ENCODE measurements at regions of chr17 and their contacts with region 1.

Region 1: GRCh38 chr17:78769196-78769773 is 12.8 kb downstream of the CYTH1 start:
- DNase-seq: peak; percentile 49
- H3K4me3 Mint-ChIP-seq: no peak overlapping the region
- H3K27ac Mint-ChIP-seq: no peak overlapping the region
- H3K4me1 Mint-ChIP-seq: peaks cover 52% of the 10 kb centered on the region
- H3K27me3 Mint-ChIP-seq: no peaks in the 10 kb centered on the region

Region 2: DNA sequence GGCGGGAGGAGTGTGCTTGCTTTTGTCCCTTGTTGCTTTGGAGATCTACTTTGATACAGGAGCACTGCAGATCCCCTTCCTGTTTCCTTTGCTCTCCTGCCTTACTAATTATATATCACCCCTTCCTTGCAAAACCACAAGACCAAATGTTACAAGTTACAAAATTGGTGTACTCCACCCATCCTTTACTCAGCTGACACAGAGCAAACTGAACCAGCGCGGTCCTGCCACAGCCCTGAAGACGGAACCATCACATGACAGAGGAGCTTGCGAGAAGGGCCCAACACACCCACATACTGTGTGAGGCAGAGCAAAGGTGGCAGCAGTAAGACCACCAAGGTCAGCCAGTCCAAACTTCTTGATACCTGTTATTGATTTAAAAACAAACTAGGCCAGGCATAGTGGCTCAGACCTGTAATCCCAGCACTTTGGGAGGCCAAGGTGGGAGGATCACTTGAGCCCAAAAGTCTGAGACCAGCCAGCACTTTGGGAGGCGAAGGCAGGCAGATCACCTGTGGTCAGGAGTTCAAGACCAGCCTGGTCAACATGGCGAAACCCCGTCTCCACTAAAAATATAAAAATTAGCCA is 20.5 kb before region 1 on chr17:
- CTCF ChIA-PET with region 1: interaction called, 21 read pairs
- DNase-seq: peak; percentile 90
- H3K4me3 Mint-ChIP-seq: peak overlapping the region; percentile 72
- H3K27ac Mint-ChIP-seq: peak overlapping the region; percentile 91
- H3K4me1 Mint-ChIP-seq: peaks cover 96% of the 10 kb centered on the region
- H3K27me3 Mint-ChIP-seq: no peaks in the 10 kb centered on the region

Measured in activated naive CD4-positive, alpha-beta T cell treated with anti-CD3 and anti-CD28 coated beads, Interleukin-2, amount 10 ng/mL, durations not matched to agents 7 days and 5 days (primary cell).